Caco-2 (cell line): ENCODE measurements at regions of chr17 and their contacts with region 1.

Region 1: DNA sequence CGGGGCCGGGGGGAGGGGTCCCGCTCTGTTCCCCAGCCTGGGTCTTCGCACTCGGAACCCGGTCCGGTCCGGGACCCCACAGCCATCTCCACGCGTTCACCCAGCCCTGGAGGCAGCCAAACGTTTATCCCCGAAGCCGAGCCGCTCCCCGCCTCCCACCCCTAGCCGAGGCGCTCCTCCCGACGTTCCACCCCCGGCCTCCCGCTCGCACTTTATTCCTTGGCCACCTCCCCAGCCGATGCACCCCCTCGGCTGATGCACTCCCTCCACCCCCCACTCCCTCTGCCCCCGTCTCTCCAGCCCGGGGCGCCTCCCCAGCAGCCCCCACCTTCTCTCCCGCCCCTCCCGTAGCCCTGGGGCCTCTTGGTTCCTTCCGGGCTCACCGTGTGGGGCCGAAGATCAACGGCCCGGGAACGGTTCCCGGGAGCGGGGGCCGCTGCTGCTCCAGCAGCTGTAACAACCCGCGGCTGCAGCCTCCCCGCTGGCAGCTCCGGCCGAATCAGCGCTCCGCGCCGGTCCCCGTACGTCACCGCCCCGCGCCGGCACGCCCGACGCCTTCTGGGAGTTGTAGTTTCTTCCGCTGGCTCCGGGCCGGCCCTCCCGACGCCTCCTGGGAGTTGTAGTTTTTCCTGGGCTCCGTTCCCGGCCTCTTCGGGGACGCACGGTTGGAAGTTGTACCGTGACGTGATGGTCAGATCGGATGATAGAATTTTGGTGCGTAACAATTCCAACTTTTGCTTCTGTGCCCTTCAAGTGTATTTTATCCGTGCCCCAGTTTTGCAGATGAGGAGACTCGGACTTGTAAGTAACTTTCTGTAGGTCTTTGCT is at the starts of genes LRRC3C and ORMDL3:
- DNase-seq: peak; percentile 95 to 97
- H3K4me3 ChIP-seq: peak within 1 kb of the TSS; percentile 89
- H3K4me3 Mint-ChIP-seq: peak within 1 kb of the TSS; percentile 87
- H3K27ac Mint-ChIP-seq: peak within 1 kb of the TSS; percentile 97
- H3K4me1 ChIP-seq: peaks cover 29% of the 10 kb centered on the region
- H3K4me1 Mint-ChIP-seq: peaks cover 7% of the 10 kb centered on the region
- H3K27me3 ChIP-seq: no peaks in the 10 kb centered on the region
- H3K27me3 Mint-ChIP-seq: no peaks in the 10 kb centered on the region
- CTCF ChIP-seq: no peak
- total RNA-seq, gene LRRC3C: not detected in 2 replicates
- total RNA-seq, gene ORMDL3: 70.6 and 75.2 TPM in 2 replicates

Region 2: GRCh38 chr17:39782485-39782884 is 144.8 kb before region 1 on chr17:
- CTCF ChIA-PET with region 1: no interaction called
- POLR2A ChIA-PET with region 1: no interaction called
- intact Hi-C with region 1: loop called (anchors 5 kb)
- DNase-seq: peak; percentile 64 to 76
- H3K4me3 ChIP-seq: no peak overlapping the region
- H3K4me3 Mint-ChIP-seq: peak overlapping the region; percentile 27
- H3K27ac Mint-ChIP-seq: peak overlapping the region; percentile 52
- H3K4me1 ChIP-seq: peaks cover 24% of the 10 kb centered on the region
- H3K4me1 Mint-ChIP-seq: peaks cover 21% of the 10 kb centered on the region
- H3K27me3 ChIP-seq: no peaks in the 10 kb centered on the region
- H3K27me3 Mint-ChIP-seq: no peaks in the 10 kb centered on the region
- CTCF ChIP-seq: no peak